Right ventricle myocardium inferior (tissue), 1 donor: ENCODE measurements at regions of chr13 and their contacts with region 1.

Region 1: DNA sequence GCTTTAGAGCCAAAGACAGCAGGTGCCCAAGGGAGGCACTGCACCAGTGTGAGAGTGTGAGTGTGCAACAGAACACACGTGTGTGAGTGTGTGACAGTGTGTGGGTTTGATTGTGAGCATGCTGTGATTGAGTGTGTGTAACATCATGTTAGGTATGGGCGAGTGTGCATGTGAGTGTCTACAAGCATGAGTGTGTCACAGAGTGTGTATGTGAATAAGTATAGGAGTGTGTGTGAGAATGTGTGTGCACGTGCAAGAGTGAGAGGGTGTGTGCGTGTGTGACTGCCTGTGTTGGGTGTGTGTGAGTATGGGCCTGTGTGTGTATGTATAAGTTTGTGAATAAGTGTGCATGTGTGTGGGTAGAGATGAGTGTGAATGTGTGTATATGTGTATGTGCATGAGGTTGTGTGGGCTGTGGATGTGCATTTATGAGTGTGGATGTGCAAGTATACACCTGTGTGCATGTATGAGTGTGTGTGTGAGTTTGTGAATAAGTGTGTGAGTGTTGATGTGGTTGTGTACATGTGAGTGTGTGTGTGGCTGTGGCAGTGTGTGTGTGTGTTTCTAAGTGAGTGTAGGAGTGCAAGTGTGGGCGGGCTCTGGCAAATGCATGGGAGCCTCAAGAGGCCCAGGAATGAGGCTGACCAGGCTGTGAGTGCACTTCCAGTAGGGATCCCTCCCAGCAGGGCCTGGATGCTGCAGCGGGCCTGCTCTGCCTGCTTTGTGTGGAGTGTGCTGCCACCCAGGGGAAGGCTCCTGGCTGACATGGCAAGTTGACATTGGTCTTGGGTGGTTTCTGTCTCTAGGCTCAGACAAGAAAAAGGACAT is 198.4 kb downstream of the COL4A1 start:
- DNase-seq: peak; percentile 89
- ATAC-seq: peak; percentile 92

Region 2: GRCh38 chr13:108961542-108962125 is 1146.9 kb before region 1 on chr13:
- intact Hi-C with region 1: loop called (anchors 5 kb)
- DNase-seq: no peak
- ATAC-seq: peak; percentile 73

Region 3: DNA sequence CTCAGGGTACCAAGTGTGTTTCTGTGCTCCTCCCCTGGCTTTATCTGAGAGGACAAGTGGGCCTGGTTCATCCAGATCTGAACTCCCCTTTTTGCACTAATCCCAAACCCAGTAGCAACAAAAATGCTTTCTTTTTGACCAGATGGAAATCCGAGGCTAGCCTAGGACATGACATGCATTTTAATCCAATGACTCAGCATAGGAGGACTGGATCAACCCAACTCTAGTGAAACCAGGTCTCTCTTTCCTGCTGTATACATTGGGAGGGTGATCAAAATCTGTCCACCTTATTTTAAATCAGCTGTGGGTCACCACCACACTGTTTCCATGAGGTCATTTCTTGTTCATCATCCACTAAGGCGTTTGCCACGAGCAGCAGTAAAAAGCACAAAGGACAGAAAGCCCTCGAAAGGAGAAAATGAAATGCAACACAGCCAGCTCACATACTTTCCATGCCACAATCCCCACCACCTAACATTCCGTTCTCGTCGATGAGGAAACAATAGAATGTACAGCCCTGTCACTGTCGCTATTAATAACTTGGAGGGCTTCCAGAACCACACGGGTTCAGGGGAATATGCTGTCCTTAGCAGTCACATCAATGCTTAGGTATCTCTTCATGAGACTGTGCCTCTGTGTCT is 865.1 kb before region 1 on chr13:
- intact Hi-C with region 1: loop called (anchors 5 kb)
- DNase-seq: no peak
- ATAC-seq: peak; percentile 92

Region 4: GRCh38 chr13:109610517-109610916 is 498.0 kb before region 1 on chr13:
- intact Hi-C with region 1: loop called (anchors 2 kb)
- DNase-seq: peak; percentile 63
- ATAC-seq: peak; percentile 60

Region 5: GRCh38 chr13:109869312-109870237 is 239.0 kb before region 1 on chr13:
- intact Hi-C with region 1: loop called (anchors 10 kb)
- DNase-seq: peak; percentile 85
- ATAC-seq: peak; percentile 87

Region 6: DNA sequence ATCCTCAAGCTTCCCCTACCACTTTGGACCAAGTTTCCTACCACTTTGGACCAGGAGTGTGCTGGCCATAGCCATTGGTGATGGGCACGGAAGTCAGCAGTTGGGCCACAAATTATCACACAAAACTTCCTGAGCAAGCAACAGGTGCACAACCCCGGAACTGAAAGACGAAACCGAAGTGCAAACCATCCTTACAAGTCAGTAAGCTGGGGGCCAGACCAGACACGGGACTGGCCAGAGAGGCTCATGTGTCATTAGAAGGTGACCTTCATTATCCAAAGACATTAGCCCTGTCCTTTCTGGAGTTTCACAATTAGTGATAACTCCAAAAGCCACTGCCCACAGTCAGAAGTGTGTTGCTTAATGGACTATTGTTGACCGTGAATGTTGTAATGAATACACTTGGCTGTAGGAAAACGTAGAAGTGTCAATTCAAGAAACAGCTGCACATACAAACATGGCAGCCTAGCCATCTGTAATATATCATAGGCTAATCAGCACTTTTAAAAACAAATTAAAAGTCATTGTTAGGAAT is 78.1 kb before region 1 on chr13:
- intact Hi-C with region 1: no loop called
- DNase-seq: no peak
- ATAC-seq: no peak

Region 7: GRCh38 chr13:110070511-110071120 is 37.9 kb before region 1 on chr13:
- intact Hi-C with region 1: no loop called
- DNase-seq: no peak
- ATAC-seq: no peak

Region 8: GRCh38 chr13:110138010-110138699 is 29.6 kb after region 1 on chr13:
- intact Hi-C with region 1: loop called (anchors 2 kb)
- DNase-seq: peak; percentile 93
- ATAC-seq: peak; percentile 52